Activated naive CD4-positive, alpha-beta T cell treated with anti-CD3 and anti-CD28 coated beads for 36 hours (primary cell): ENCODE measurements at regions of chr2 and their contacts with region 1.

Region 1: DNA sequence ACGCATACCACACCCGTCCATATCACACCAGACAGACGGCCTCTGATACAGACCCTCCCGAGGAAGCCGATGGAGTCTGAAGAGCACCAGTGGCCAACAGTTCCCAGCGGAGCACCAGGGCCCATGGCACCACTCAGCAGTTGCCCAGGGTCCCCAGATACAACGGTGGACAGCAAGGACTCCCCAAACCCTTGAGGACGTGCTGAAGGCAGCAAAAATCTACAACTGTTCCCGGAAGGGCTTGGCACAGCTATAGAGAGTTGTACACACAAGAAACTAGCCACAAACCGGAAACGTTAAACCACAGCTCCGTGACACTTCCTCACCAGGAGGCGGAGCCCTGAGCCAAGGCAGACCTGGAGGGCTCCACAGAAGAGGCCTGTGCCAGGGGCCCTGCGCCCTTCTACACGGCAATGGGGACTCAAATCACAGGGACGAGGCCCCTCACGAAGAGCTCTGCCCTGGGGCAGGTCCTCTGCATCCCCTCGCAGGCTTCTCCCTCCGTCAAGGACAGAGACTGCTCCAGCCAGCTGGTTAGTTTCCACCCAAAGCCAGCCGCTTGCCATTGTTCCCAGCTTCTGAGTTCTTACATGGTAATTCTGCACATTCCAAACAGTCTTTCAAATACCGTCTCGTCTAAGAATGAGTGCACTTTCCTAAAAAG is 133.4 kb downstream of the HDAC4 start:
- DNase-seq: peak; percentile 98
- H3K4me3 Mint-ChIP-seq: peak overlapping the region; percentile 71
- H3K27ac Mint-ChIP-seq: peak overlapping the region; percentile 91
- H3K4me1 Mint-ChIP-seq: peaks cover 72% of the 10 kb centered on the region
- H3K27me3 Mint-ChIP-seq: peaks cover 14% of the 10 kb centered on the region

Region 2: DNA sequence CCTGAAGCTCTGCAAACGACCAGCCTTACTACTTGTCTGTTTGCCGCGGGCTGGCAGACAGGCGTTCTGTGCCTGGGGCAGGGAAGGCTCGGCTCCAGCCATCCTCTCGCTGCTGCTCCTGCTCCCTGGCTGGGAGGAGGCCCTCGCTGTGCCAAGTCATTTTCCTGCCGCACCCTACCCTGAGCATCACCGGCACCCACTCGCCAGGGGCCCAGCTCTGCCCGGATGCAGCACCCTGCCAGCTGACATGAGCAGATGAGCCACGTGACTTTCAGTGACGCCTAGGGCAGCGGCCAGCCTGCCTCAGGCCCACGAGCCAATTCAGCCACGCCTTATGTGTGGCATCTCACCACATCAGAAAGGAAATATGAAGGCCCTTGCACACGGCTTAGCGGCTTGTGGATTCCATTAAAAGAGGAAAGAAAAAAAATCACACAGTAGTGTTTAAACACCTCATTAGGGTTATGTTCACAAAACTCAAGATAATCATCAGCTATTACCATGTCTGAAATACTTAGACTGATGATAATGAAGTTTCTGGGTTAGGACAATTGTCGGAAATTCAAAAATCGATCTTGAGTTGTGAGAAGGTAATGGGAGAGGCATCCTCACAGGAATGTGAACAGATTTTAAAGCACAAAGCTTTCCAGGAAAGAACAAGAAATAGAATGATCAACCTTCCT is 169.0 kb before region 1 on chr2:
- CTCF ChIA-PET with region 1: no interaction called
- intact Hi-C with region 1: no loop called
- DNase-seq: no peak
- H3K4me3 Mint-ChIP-seq: no peak overlapping the region
- H3K27ac Mint-ChIP-seq: no peak overlapping the region
- H3K4me1 Mint-ChIP-seq: no peaks in the 10 kb centered on the region
- H3K27me3 Mint-ChIP-seq: no peaks in the 10 kb centered on the region

Region 3: DNA sequence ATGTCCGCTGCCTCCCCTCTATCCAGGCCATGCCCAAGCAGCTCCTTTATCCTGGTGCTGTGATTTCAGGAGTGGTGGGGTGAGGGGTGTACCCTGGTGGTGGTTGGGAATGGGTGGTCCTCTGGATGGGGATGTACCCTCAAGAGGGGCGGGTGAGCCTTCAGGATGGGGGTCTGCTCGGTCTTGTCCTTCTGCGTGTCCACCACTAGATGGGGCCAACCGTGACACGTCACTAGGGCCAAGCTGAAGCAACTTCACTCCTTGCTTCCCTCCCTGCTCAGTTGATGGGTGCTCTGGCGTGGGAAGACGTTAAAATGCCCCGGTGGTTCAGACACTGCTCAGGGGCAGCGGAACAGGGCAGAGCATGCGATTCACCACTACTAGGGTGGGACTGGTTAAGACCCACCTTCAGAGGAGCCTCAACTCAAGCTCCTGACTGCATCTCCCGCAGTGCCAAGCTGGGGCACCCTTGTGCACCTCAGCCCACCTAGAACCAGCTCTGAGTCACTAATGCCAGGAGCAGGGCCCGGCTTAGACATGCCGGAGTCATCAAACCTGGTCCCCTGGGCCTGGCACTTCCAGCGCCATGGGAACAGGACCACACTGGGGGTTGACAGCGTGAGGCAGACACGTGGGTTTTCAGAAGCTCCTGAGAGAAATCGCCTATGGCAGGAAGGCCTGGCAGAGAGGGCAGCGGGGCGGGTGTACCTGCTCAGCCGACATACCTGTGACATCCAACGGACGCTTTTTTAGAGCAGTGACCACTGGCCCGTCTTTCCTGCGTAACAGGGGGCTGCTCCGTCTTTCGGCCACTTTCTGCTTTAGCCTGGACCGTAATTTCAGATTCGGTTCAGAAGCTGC is 123.3 kb before region 1 on chr2:
- CTCF ChIA-PET with region 1: interaction called, 10 read pairs
- intact Hi-C with region 1: loop called (anchors 1 kb)
- DNase-seq: peak; percentile 40
- H3K4me3 Mint-ChIP-seq: no peak overlapping the region
- H3K27ac Mint-ChIP-seq: peak overlapping the region; percentile 36
- H3K4me1 Mint-ChIP-seq: no peaks in the 10 kb centered on the region
- H3K27me3 Mint-ChIP-seq: no peaks in the 10 kb centered on the region

Region 4: GRCh38 chr2:239230318-239231052 is 36.9 kb before region 1 on chr2:
- CTCF ChIA-PET with region 1: interaction called, 5 read pairs
- intact Hi-C with region 1: loop called (anchors 2 kb)
- DNase-seq: peak; percentile 42
- H3K4me3 Mint-ChIP-seq: peak overlapping the region; percentile 60
- H3K27ac Mint-ChIP-seq: peak overlapping the region; percentile 79
- H3K4me1 Mint-ChIP-seq: peaks cover 70% of the 10 kb centered on the region
- H3K27me3 Mint-ChIP-seq: no peaks in the 10 kb centered on the region

Region 5: GRCh38 chr2:239298116-239298804 is 30.8 kb after region 1 on chr2:
- CTCF ChIA-PET with region 1: interaction called, 14 read pairs
- intact Hi-C with region 1: loop called (anchors 1 kb)
- DNase-seq: peak; percentile 91
- H3K4me3 Mint-ChIP-seq: peak overlapping the region; percentile 67
- H3K27ac Mint-ChIP-seq: peak overlapping the region; percentile 74
- H3K4me1 Mint-ChIP-seq: peaks cover 74% of the 10 kb centered on the region
- H3K27me3 Mint-ChIP-seq: peaks cover 2% of the 10 kb centered on the region

Region 6: DNA sequence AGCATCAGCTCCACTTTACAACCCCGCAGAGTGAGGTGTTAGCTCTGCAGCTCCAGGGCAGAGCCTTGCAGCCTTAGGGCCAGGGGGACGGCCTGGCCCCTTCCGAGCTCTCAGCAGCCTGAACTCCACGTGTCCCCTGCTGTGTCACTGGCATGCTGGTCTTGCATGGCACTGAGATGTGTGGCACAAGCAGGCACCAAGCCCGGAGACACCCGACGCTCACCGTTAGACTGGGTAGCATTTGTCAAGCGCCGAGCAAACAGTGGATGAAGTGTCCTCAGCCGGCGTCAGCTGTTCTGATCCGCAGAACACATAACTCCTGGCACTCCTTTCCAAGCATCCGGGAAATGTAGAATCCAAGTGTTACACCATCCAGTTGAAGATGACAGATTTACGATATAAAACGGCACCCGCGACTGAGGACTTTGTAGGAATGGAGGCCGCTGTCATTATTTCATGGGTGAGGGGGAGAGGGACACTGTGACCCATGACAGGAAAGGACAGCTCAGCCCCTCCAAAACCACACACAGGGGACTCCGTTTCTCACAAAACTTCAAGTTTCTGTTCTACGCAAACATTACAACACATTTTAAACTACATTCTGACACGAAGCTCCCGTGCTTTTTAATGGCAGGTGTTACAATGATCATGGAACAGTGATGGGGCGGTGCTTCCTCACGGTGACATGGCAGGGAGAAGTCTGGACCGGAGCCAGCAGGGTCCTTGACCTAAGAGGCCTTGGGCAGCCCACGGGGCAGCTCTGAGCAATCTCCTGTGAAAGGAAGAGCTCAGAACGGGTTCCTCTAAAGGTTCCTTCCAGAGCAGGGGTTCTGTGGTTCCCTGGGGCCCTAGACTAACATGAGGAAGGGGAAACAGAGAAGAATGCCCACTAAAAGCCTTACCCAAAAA is 44.0 kb after region 1 on chr2:
- CTCF ChIA-PET with region 1: no interaction called
- intact Hi-C with region 1: no loop called
- DNase-seq: peak; percentile 2
- H3K4me3 Mint-ChIP-seq: no peak overlapping the region
- H3K27ac Mint-ChIP-seq: no peak overlapping the region
- H3K4me1 Mint-ChIP-seq: peaks cover 13% of the 10 kb centered on the region
- H3K27me3 Mint-ChIP-seq: no peaks in the 10 kb centered on the region

Region 7: DNA sequence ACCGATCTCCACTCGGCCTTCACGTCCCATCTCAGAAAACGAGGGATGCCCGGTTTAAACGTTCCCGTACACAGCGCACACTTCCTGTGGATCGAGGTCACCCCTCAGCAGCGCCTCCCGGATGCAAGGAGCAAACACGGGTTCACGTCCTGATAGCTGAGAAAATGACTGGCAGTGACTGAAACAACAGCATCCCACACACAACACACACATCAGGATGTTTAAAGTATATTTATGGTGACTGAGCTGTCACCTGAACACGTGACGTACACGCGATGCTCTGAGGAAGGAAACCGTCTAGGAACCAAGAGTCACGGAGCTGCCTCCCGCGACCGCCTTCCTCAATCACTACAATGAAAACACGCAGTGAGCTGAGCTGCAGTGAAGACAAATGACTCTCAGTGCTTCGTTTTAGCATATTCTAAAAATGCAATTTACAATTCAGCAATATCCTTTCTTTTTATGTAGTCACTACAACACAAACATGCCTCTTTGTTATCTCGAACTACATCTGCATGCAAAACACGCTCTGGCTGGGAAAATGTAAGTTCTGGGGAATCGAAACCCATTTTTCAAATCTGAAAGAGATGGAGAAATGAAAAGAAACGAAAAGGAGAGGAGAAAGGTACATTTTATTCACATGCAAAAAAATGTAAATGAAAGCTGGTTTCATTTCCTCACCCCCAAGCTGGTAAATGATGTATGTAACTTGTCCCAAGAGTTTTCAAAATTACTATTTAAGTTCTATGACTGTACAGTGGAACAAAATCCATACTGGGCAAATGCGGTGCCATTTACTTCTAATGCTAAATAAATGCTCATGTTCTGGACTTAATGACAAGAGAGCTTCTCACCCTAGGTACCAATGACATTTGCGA is 113.7 kb after region 1 on chr2:
- CTCF ChIA-PET with region 1: interaction called, 7 read pairs
- intact Hi-C with region 1: loop called (anchors 1 kb)
- DNase-seq: peak; percentile 85
- H3K4me3 Mint-ChIP-seq: peak overlapping the region; percentile 73
- H3K27ac Mint-ChIP-seq: peak overlapping the region; percentile 95
- H3K4me1 Mint-ChIP-seq: peaks cover 44% of the 10 kb centered on the region
- H3K27me3 Mint-ChIP-seq: no peaks in the 10 kb centered on the region

Region 8: DNA sequence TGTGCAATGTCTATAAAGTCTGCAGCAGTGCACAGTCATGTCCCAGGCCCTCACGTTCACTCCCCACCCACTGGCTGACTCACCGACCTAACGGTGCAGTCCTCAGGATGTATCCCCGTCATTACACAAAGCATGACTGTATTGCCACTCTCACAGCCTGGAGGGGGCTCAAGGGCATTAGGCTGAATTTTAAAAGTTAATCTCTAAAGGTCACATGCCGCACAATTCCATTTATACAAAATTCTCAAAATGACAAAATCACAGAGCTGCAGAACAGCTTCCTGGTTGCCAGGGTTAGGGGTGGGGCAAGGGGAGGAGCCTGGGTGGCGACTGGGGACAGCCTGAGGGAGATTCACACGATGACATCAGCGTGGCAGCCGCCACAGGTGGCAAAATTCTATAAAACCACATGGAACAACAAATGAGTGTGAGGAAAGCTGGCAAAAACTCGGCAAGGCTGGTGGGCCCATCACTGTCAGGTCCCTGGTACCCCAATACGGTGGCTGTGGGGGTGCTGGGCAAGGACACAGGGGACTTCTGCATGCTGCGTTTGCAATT is 660.1 kb after region 1 on chr2:
- CTCF ChIA-PET with region 1: no interaction called
- intact Hi-C with region 1: loop called (anchors 5 kb)
- DNase-seq: peak; percentile 83
- H3K4me3 Mint-ChIP-seq: no peak overlapping the region
- H3K27ac Mint-ChIP-seq: peak overlapping the region; percentile 66
- H3K4me1 Mint-ChIP-seq: peaks cover 17% of the 10 kb centered on the region
- H3K27me3 Mint-ChIP-seq: peaks cover 5% of the 10 kb centered on the region

Region 9: DNA sequence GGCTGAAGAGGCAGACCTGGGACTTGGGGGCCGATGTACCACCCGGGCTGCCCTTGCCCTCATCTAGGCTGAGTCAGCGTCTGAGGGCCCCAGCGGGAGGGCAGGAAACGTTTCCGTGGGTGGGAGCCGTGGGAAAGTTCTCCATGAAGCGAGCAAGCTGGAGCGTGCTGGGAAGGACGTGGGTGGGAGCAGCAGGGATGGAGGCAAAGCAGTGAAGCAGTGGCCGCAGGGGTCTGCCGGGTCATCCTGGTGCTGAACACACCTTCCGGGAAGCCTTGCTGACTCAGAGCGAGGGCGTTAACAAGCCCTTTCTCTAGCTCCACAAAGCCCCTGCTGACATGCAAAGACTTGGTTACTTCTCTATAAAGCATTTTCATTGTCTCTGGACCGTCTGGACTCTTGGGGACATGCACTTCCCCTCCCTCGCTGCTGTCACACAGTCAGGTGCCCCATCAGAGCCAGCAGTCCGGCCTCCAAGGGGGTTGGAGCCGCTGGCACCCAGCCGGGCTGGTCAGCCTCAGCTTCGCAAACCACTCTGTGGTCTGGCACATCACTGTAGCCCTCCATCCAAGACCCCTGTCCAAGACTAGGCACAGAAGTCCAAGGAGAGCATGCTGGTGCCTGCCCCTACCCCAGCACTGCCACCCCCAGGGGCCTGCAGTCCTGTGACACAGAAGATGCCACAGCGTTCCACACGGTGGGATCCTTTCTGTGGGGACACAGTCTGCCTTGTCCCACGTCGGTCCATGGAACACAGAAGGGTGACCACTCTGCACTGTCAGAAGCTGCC is 1053.0 kb after region 1 on chr2:
- CTCF ChIA-PET with region 1: no interaction called
- intact Hi-C with region 1: no loop called
- DNase-seq: no peak
- H3K4me3 Mint-ChIP-seq: no peak overlapping the region
- H3K27ac Mint-ChIP-seq: no peak overlapping the region
- H3K4me1 Mint-ChIP-seq: no peaks in the 10 kb centered on the region
- H3K27me3 Mint-ChIP-seq: peaks cover 6% of the 10 kb centered on the region